Activated CD4-positive, alpha-beta T cell treated with anti-CD3 and anti-CD28 coated beads for 36 hours (primary cell): ENCODE measurements at regions of chr1 and their contacts with region 1.

Region 1: GRCh38 chr1:199308331-199308846 is 669.5 kb downstream of the PTPRC start:
- DNase-seq: peak; percentile 5
- ATAC-seq: peak; percentile 93
- H3K4me3 Mint-ChIP-seq: no peak overlapping the region
- H3K27ac Mint-ChIP-seq: peak overlapping the region; percentile 69
- H3K4me1 Mint-ChIP-seq: peaks cover 44% of the 10 kb centered on the region
- H3K27me3 Mint-ChIP-seq: peaks cover 25% of the 10 kb centered on the region

Region 2: DNA sequence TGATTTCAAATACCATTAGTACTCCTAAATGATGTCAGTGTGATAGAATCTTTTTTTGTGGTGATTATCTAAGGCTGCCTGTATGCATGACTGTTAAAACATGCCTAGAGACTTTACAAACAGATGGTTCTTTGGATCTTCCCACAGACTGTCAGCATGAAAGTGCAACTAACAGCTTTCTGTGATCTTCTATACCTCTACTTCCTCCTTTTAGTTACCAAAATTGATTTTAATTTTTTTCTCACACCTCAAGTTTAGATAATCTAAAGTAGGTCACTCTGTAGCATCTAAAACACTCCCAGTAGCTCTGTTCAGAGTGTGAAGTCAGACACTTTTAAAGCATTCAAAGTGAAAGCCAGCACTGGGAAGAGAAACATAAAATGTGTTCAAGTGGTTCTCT is 135.0 kb before region 1 on chr1:
- CTCF ChIA-PET with region 1: no interaction called
- POLR2A ChIA-PET with region 1: no interaction called
- intact Hi-C with region 1: loop called (anchors 1 to 10 kb)
- DNase-seq: peak; percentile 11
- ATAC-seq: peak; percentile 89
- H3K4me3 Mint-ChIP-seq: no peak overlapping the region
- H3K27ac Mint-ChIP-seq: peak overlapping the region; percentile 39
- H3K4me1 Mint-ChIP-seq: peaks cover 58% of the 10 kb centered on the region
- H3K27me3 Mint-ChIP-seq: peaks cover 3% of the 10 kb centered on the region

Region 3: DNA sequence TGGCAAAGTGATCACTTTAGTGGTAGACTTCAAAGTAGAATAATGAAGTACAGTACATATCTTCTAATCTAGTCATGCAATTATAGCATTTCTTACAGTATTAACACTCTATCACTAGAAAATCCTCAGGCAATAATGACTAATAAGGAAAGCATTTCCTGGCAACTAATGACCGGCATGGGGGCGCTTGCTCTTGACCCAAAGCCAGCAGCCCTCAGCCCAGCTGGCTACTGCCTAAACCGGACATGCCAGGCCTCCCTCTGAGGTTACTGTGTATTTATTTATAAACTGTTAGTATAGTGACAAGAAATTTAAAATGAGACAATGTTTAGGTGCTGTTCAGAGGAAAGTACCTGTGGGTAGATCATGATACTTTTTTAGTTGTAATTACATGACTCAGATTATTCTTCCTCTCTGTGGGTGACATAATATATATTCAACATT is 35.7 kb before region 1 on chr1:
- CTCF ChIA-PET with region 1: no interaction called
- POLR2A ChIA-PET with region 1: no interaction called
- intact Hi-C with region 1: loop called in 1 of 2 experiments (anchors 5 kb)
- DNase-seq: no peak
- ATAC-seq: no peak
- H3K4me3 Mint-ChIP-seq: no peak overlapping the region
- H3K27ac Mint-ChIP-seq: no peak overlapping the region
- H3K4me1 Mint-ChIP-seq: peaks cover 12% of the 10 kb centered on the region
- H3K27me3 Mint-ChIP-seq: no peaks in the 10 kb centered on the region

Region 4: DNA sequence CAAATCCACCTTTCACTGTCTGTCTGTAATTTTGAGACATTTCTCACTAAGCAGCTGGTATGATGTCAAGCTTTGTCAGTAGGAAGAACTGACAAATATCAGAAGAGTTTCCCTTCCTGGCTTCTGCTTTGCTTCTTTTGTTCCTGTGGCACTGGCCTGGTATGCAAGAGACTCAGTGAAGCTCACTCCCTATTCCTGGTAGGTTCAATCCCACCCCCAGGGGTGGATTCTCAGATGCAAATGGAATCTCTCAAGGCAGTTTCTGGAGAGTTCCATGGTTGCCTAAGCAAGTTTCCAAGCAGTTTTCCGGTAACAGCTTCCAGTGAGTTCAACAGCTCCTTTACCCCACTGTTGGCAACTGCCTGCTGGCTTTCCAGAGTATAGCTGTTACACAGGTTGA is 13.9 kb after region 1 on chr1:
- CTCF ChIA-PET with region 1: no interaction called
- POLR2A ChIA-PET with region 1: no interaction called
- intact Hi-C with region 1: no loop called
- DNase-seq: no peak
- ATAC-seq: no peak
- H3K4me3 Mint-ChIP-seq: no peak overlapping the region
- H3K27ac Mint-ChIP-seq: no peak overlapping the region
- H3K4me1 Mint-ChIP-seq: no peaks in the 10 kb centered on the region
- H3K27me3 Mint-ChIP-seq: peaks cover 5% of the 10 kb centered on the region